Heart right ventricle (tissue), 16 donors: ENCODE measurements at regions of chr13 and their contacts with region 1.

Region 1: GRCh38 chr13:77907666-77908341 is 10.8 kb downstream of the EDNRB start:
- DNase-seq: peak in 1 of 2 donors; percentile 38
- ATAC-seq: peak in 7 of 8 donors; percentile 56 to 83 (median 68)
- H3K4me3 ChIP-seq: no peak overlapping the region
- H3K27ac ChIP-seq: peak overlapping the region in 6 of 10 donors; percentile 17 to 52 (median 24)
- H3K4me1 ChIP-seq: peaks cover 0 to 50% (median 3%) of the 10 kb centered on the region in 9 donors
- H3K27me3 ChIP-seq: no peaks in the 10 kb centered on the region
- CTCF ChIP-seq: no peak

Region 2: GRCh38 chr13:77952727-77953126 is 44.9 kb after region 1 on chr13:
- intact Hi-C with region 1: no loop called
- DNase-seq: no peak
- ATAC-seq: no peak
- H3K4me3 ChIP-seq: no peak overlapping the region
- H3K27ac ChIP-seq: no peak overlapping the region
- H3K4me1 ChIP-seq: no peaks in the 10 kb centered on the region
- H3K27me3 ChIP-seq: no peaks in the 10 kb centered on the region
- CTCF ChIP-seq: no peak

Region 3: GRCh38 chr13:77980592-77980991 is 72.8 kb after region 1 on chr13:
- intact Hi-C with region 1: loop called in 1 of 10 experiments (anchors 10 kb)
- DNase-seq: peak in 1 of 2 donors; percentile 18
- ATAC-seq: peak in 5 of 8 donors; percentile 38 to 69 (median 63)
- H3K4me3 ChIP-seq: no peak overlapping the region
- H3K27ac ChIP-seq: peak overlapping the region in 4 of 10 donors; percentile 30 to 67 (median 45)
- H3K4me1 ChIP-seq: peaks cover 0 to 24% (median 0%) of the 10 kb centered on the region in 9 donors
- H3K27me3 ChIP-seq: no peaks in the 10 kb centered on the region
- CTCF ChIP-seq: no peak